ENCODE measurements at regions of chr12 and their contacts with region 1.

Region 1: GRCh38 chr12:65556681-65557437 is 267.4 kb upstream of the HMGA2 start:
- DNase-seq: peak; percentile 71
- H3K4me3 Mint-ChIP-seq: no peak overlapping the region
- H3K27ac Mint-ChIP-seq: no peak overlapping the region
- H3K4me1 Mint-ChIP-seq: peaks cover 7% of the 10 kb centered on the region
- H3K27me3 Mint-ChIP-seq: peaks cover 17% of the 10 kb centered on the region

Region 2: DNA sequence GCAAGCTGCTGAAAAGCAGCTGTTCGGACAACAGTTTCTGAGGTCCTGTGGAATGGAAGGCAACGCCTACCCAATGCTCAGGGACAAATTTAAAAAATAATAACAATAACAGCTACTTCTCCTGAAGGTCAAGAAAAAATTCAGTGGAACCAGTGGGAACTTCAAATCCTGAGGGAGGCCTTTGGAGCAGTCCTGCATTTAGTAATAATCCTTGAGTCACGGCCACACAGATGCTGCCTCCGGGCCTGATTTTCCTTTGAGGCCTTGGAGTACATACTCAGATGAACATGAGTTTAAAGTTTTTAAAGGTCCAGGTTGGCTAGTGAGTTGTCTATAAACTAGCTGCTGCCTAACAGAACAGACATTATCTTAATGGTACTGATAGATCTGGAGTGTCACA is 10.3 kb before region 1 on chr12:
- CTCF ChIA-PET with region 1: interaction called, 10 read pairs
- POLR2A ChIA-PET with region 1: no interaction called
- intact Hi-C with region 1: no loop called
- DNase-seq: no peak
- H3K4me3 Mint-ChIP-seq: no peak overlapping the region
- H3K27ac Mint-ChIP-seq: no peak overlapping the region
- H3K4me1 Mint-ChIP-seq: no peaks in the 10 kb centered on the region
- H3K27me3 Mint-ChIP-seq: peaks cover 2% of the 10 kb centered on the region

Region 3: GRCh38 chr12:65685514-65685913 is 128.7 kb after region 1 on chr12:
- CTCF ChIA-PET with region 1: no interaction called
- POLR2A ChIA-PET with region 1: no interaction called
- intact Hi-C with region 1: loop called (anchors 2 kb)
- DNase-seq: no peak
- H3K4me3 Mint-ChIP-seq: no peak overlapping the region
- H3K27ac Mint-ChIP-seq: no peak overlapping the region
- H3K4me1 Mint-ChIP-seq: no peaks in the 10 kb centered on the region
- H3K27me3 Mint-ChIP-seq: peaks cover 3% of the 10 kb centered on the region

Region 4: DNA sequence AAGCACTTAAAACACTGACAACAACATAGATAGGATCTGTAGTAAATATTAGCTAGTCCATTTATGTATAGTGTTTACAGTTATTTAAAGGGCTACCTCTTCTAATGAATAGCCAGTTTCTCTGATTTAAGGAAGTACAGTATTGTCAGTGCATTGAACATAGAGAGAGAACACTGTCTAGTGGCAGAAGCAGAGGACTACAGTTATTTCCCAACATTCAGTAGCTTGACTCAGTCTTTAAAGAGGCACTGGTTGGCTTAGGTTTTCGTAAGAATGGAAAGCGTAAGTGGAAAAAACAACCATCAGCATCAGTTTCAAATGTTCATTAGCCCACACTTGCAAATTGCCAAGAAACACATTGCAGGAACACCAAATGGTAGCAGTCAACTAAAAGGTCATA is 142.4 kb after region 1 on chr12:
- CTCF ChIA-PET with region 1: no interaction called
- POLR2A ChIA-PET with region 1: no interaction called
- intact Hi-C with region 1: no loop called
- DNase-seq: no peak
- H3K4me3 Mint-ChIP-seq: no peak overlapping the region
- H3K27ac Mint-ChIP-seq: no peak overlapping the region
- H3K4me1 Mint-ChIP-seq: no peaks in the 10 kb centered on the region
- H3K27me3 Mint-ChIP-seq: peaks cover 2% of the 10 kb centered on the region

Region 5: GRCh38 chr12:65986047-65986446 is 429.2 kb after region 1 on chr12:
- CTCF ChIA-PET with region 1: no interaction called
- POLR2A ChIA-PET with region 1: no interaction called
- intact Hi-C with region 1: loop called (anchors 1 kb)
- DNase-seq: no peak
- H3K4me3 Mint-ChIP-seq: no peak overlapping the region
- H3K27ac Mint-ChIP-seq: no peak overlapping the region
- H3K4me1 Mint-ChIP-seq: no peaks in the 10 kb centered on the region
- H3K27me3 Mint-ChIP-seq: no peaks in the 10 kb centered on the region

Region 6: DNA sequence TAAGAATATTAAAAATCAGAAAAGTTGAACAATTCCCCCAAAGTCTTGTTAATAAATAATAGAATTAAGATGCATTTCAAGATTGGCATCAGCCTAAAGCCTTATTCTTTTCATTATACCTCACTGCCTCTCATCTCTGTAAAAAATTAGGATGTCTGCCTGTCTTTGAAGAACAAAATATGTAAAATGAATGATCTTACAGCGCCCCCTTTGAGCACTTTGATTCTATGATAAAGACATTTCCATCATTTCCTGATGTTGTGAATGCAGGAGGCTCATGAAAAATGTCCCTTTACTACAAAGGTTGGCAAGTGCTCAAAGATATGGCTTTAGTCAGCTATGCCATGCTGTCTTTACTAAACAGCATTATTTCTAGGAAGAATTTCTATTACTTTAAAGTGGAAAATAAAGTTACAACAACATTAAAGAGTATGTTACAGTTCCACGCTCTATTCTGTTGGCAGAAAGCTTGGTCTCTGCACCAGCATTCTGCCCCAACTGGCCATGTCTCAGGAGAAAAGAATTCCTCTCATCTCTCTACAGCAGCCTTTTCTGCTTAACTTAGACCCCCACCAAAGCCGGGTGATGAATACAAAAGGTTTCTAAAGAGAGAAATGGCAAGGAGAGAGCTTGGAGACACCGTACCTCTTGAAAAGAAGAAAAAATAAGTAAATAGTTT is 478.6 kb after region 1 on chr12:
- CTCF ChIA-PET with region 1: interaction called, 3 read pairs
- POLR2A ChIA-PET with region 1: no interaction called
- intact Hi-C with region 1: loop called (anchors 5 kb)
- DNase-seq: no peak
- H3K4me3 Mint-ChIP-seq: no peak overlapping the region
- H3K27ac Mint-ChIP-seq: no peak overlapping the region
- H3K4me1 Mint-ChIP-seq: no peaks in the 10 kb centered on the region
- H3K27me3 Mint-ChIP-seq: peaks cover 9% of the 10 kb centered on the region

Region 7: DNA sequence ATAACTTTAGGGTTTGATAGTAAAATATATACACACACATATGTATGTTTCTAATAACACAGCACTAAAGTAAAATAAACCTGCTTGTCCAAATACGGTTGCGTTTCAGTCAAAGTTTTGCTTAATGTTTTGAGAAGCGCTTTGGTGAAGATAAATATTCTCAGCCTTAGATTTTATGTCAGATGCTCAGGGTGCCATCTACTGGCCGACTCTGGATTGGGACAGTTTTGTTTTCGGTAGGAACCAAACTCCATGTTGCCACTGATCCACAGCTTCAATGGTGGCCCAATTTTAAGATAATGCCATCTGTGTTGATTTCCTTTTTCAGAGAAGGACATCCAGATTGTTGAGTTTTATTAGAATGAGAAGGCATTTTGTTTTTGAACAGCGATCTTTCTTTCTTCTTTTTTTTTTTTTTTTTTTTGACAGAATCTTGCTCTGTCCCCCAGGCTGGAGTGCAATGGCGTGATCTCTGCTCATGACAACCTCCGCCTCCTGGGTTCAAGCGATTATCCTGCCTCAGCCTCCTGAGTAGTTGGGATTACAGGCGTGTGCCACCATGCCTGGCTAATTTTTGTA is 530.6 kb after region 1 on chr12:
- CTCF ChIA-PET with region 1: interaction called, 9 read pairs
- POLR2A ChIA-PET with region 1: no interaction called
- intact Hi-C with region 1: loop called (anchors 1 kb)
- DNase-seq: peak; percentile 65
- H3K4me3 Mint-ChIP-seq: no peak overlapping the region
- H3K27ac Mint-ChIP-seq: no peak overlapping the region
- H3K4me1 Mint-ChIP-seq: no peaks in the 10 kb centered on the region
- H3K27me3 Mint-ChIP-seq: peaks cover 14% of the 10 kb centered on the region

Region 8: GRCh38 chr12:66107451-66107915 is 550.6 kb after region 1 on chr12:
- CTCF ChIA-PET with region 1: interaction called, 3 read pairs
- POLR2A ChIA-PET with region 1: no interaction called
- intact Hi-C with region 1: loop called (anchors 1 kb)
- DNase-seq: peak; percentile 21
- H3K4me3 Mint-ChIP-seq: no peak overlapping the region
- H3K27ac Mint-ChIP-seq: no peak overlapping the region
- H3K4me1 Mint-ChIP-seq: peaks cover 2% of the 10 kb centered on the region
- H3K27me3 Mint-ChIP-seq: peaks cover 10% of the 10 kb centered on the region

Measured in activated CD4-positive, alpha-beta memory T cell treated with anti-CD3 and anti-CD28 coated beads for 36 hours (primary cell).